ENCODE measurements at regions of chr4 and their contacts with region 1.

Region 1: GRCh38 chr4:98143001-98143899 is at the start of gene STPG2:
- DNase-seq: peak; percentile 87 to 97
- ATAC-seq: peak; percentile 100
- H3K4me3 ChIP-seq: peak within 1 kb of the TSS; percentile 87
- H3K4me3 Mint-ChIP-seq: peak within 1 kb of the TSS; percentile 98
- H3K27ac ChIP-seq: peak within 1 kb of the TSS; percentile 95
- H3K27ac Mint-ChIP-seq: peak within 1 kb of the TSS; percentile 94 to 95
- H3K4me1 ChIP-seq: peaks cover 13% of the 10 kb centered on the region
- H3K4me1 Mint-ChIP-seq: peaks cover 15 to 19% of the 10 kb centered on the region in 2 donors
- H3K27me3 ChIP-seq: no peaks in the 10 kb centered on the region
- H3K27me3 Mint-ChIP-seq: peaks cover 12 to 22% of the 10 kb centered on the region in 2 donors
- CTCF ChIP-seq: peak; percentile 54
- total RNA-seq, gene STPG2: 0.23 TPM in 1 of 3 donors, not detected in the others

Region 2: GRCh38 chr4:96916711-96917110 is 1226.5 kb before region 1 on chr4:
- intact Hi-C with region 1: no loop called
- DNase-seq: no peak
- ATAC-seq: no peak
- H3K4me3 ChIP-seq: no peak overlapping the region
- H3K4me3 Mint-ChIP-seq: no peak overlapping the region
- H3K27ac ChIP-seq: no peak overlapping the region
- H3K27ac Mint-ChIP-seq: no peak overlapping the region
- H3K4me1 ChIP-seq: no peaks in the 10 kb centered on the region
- H3K4me1 Mint-ChIP-seq: no peaks in the 10 kb centered on the region
- H3K27me3 ChIP-seq: no peaks in the 10 kb centered on the region
- H3K27me3 Mint-ChIP-seq: no peaks in the 10 kb centered on the region
- CTCF ChIP-seq: no peak

Region 3: GRCh38 chr4:98092833-98093439 is 50.3 kb before region 1 on chr4:
- intact Hi-C with region 1: no loop called
- DNase-seq: peak in 1 of 2 donors; percentile 22
- ATAC-seq: no peak
- H3K4me3 ChIP-seq: no peak overlapping the region
- H3K4me3 Mint-ChIP-seq: no peak overlapping the region
- H3K27ac ChIP-seq: no peak overlapping the region
- H3K27ac Mint-ChIP-seq: no peak overlapping the region
- H3K4me1 ChIP-seq: no peaks in the 10 kb centered on the region
- H3K4me1 Mint-ChIP-seq: no peaks in the 10 kb centered on the region
- H3K27me3 ChIP-seq: no peaks in the 10 kb centered on the region
- H3K27me3 Mint-ChIP-seq: peaks cover 16 to 21% of the 10 kb centered on the region in 2 donors
- CTCF ChIP-seq: peak; percentile 21

Region 4: GRCh38 chr4:98260579-98261290 is 117.5 kb after region 1 on chr4:
- intact Hi-C with region 1: loop called (anchors 1 kb)
- DNase-seq: peak; percentile 78 to 94
- ATAC-seq: peak; percentile 80 to 90 (median 84)
- H3K4me3 ChIP-seq: peak overlapping the region; percentile 96
- H3K4me3 Mint-ChIP-seq: peak overlapping the region; percentile 91
- H3K27ac ChIP-seq: peak overlapping the region; percentile 73
- H3K27ac Mint-ChIP-seq: peak overlapping the region; percentile 70 to 93
- H3K4me1 ChIP-seq: peaks cover 15% of the 10 kb centered on the region
- H3K4me1 Mint-ChIP-seq: peaks cover 43 to 46% of the 10 kb centered on the region in 2 donors
- H3K27me3 ChIP-seq: no peaks in the 10 kb centered on the region
- H3K27me3 Mint-ChIP-seq: no peaks in the 10 kb centered on the region
- CTCF ChIP-seq: no peak

Region 5: GRCh38 chr4:98510757-98511517 is 367.7 kb after region 1 on chr4:
- intact Hi-C with region 1: no loop called
- DNase-seq: no peak
- ATAC-seq: no peak
- H3K4me3 ChIP-seq: no peak overlapping the region
- H3K4me3 Mint-ChIP-seq: no peak overlapping the region
- H3K27ac ChIP-seq: no peak overlapping the region
- H3K27ac Mint-ChIP-seq: no peak overlapping the region
- H3K4me1 ChIP-seq: no peaks in the 10 kb centered on the region
- H3K4me1 Mint-ChIP-seq: peaks cover 34 to 45% of the 10 kb centered on the region in 2 donors
- H3K27me3 ChIP-seq: no peaks in the 10 kb centered on the region
- H3K27me3 Mint-ChIP-seq: no peaks in the 10 kb centered on the region
- CTCF ChIP-seq: no peak

Measured in natural killer cell (primary cell).